HAP-1 (cell line): ENCODE measurements at regions of chr4 and their contacts with region 1.

Region 1: GRCh38 chr4:39977489-39978377 is at the start of gene PDS5A:
- DNase-seq: peak; percentile 89 to 91
- H3K4me3 ChIP-seq: peak within 1 kb of the TSS; percentile 96
- H3K4me1 ChIP-seq: peaks cover 13% of the 10 kb centered on the region
- H3K27me3 ChIP-seq: no peaks in the 10 kb centered on the region

Region 2: DNA sequence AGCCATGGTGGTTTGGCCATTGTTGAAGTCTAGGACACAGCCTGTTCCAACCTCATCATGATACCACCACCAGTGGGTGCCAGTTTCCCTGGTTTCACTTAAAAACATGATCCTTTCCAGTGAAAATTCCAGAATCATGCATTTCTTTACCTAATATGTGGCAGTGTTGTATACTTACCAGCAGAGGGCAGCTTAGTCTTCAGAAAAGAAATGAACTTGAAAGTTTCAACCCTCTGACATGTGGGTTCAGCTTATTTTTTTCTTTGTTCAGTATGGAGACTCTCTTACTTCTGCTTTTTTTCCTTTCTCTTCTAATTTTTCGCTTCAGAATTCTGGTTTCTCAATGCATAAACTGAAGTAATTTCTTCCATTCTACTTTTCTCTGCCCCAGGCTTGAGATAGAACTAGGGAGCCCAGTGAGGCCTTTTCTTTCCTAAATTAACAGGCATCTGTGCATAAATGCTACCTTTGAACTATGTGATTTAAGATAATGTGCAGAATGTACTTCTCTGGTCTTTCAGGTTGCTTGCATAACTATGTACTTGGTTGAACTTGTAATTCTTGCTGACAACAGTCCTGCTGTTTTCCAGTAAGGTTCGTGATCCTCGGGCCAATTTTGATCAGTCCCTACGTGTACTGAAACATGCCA is 508.2 kb before region 1 on chr4:
- in situ Hi-C with region 1: loop called (anchors 10 kb)
- DNase-seq: peak; percentile 70 to 86
- H3K4me3 ChIP-seq: no peak overlapping the region
- H3K4me1 ChIP-seq: peaks cover 10% of the 10 kb centered on the region
- H3K27me3 ChIP-seq: no peaks in the 10 kb centered on the region

Region 3: GRCh38 chr4:39873823-39874222 is 103.9 kb before region 1 on chr4:
- in situ Hi-C with region 1: no loop called
- DNase-seq: no peak
- H3K4me3 ChIP-seq: no peak overlapping the region
- H3K4me1 ChIP-seq: no peaks in the 10 kb centered on the region; the same call in 1 of the 2 replicates
- H3K27me3 ChIP-seq: no peaks in the 10 kb centered on the region

Region 4: DNA sequence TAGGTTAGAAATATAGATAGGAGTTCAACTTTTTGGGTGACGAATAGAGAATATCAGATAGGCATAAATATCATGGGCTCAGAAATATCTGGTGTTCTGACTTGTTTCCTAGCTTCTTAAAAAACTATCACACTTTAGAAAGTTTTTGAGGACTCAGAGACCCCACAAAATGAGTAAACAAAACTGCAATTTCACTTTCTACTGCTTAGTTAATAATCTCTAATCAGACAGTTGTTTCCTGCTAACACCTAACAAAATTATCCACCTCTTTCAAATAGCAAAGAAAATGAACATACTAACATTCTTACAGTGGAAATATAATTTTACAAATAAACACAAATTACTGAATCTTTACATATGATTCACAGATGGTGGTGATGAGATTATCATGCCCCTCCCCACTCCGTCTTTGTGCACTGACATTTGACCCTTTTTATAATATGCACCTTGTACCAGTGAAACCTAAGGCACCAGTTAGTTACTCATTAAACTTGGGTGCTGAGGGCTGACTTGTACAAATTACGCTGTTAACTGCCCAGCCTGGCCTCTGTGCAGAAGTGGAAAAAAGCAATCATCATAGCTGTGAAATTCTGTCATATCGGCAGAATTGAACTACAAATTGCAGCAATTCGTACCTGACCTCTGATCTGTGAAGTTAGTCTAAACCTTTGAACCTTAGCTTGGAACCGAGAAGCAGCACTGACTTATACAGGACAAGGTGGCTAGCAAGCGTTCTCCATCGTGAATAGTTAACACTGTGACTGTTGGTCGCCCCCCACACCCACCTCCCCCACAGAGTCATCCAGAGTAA is 496.1 kb after region 1 on chr4:
- in situ Hi-C with region 1: no loop called
- DNase-seq: no peak
- H3K4me3 ChIP-seq: no peak overlapping the region
- H3K4me1 ChIP-seq: peaks cover 3% of the 10 kb centered on the region
- H3K27me3 ChIP-seq: no peaks in the 10 kb centered on the region